Activated naive CD4-positive, alpha-beta T cell treated with anti-CD3 and anti-CD28 coated beads for 36 hours (primary cell): ENCODE measurements at regions of chr3 and their contacts with region 1.

Region 1: GRCh38 chr3:9890249-9891071 is at the start of gene JAGN1:
- DNase-seq: peak; percentile 95
- H3K4me3 Mint-ChIP-seq: peak within 1 kb of the TSS; percentile 98
- H3K27ac Mint-ChIP-seq: peak within 1 kb of the TSS; percentile 97
- H3K4me1 Mint-ChIP-seq: peaks cover 43% of the 10 kb centered on the region
- H3K27me3 Mint-ChIP-seq: no peaks in the 10 kb centered on the region
- total RNA-seq, gene JAGN1: 11.7 to 13.6 TPM

Region 2: GRCh38 chr3:9779721-9780457 is 110.6 kb before region 1 on chr3:
- CTCF ChIA-PET with region 1: interaction called, 4 read pairs
- intact Hi-C with region 1: loop called (anchors 1 kb)
- DNase-seq: peak; percentile 47
- H3K4me3 Mint-ChIP-seq: no peak overlapping the region
- H3K27ac Mint-ChIP-seq: peak overlapping the region; percentile 91
- H3K4me1 Mint-ChIP-seq: peaks cover 56% of the 10 kb centered on the region
- H3K27me3 Mint-ChIP-seq: no peaks in the 10 kb centered on the region

Region 3: DNA sequence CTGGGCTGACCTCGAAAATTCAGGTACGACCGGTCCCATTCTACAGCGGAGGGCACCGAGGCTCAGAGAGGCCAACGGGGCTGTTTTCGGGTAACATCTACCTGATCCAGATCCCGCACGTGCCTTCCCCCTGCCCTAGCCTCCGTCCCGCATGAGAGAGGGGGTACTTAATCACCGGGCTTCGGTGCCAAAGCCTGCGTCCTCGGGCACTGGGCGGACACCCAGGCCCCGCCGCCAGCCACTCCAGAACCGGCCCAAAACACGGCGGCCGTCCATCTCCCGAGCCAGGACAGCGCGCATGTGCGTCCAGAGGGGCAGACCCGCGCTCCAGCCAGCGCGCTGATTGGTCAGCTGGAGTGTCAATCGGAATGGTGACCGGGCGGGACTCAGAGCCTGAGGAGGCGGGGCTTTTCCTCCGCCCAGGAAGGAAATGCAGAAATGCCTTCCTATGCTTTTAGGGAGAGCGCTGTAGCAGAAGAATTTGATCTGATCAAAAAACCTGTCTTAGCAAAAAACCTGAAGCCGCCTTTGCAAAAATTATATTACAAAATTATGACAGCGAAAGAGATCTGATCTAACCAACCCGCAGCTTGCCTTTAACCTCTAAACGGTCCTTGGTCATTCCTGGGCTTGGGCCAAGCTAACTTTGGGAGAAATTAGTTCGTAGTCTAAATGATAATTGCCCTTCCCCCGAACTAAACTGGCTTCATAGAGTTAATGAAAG is 46.6 kb before region 1 on chr3 and contains the start of gene RPUSD3:
- CTCF ChIA-PET with region 1: no interaction called
- intact Hi-C with region 1: loop called (anchors 1 kb)
- DNase-seq: peak; percentile 98
- H3K4me3 Mint-ChIP-seq: peak within 1 kb of the TSS; percentile 98
- H3K27ac Mint-ChIP-seq: peak within 1 kb of the TSS; percentile 89
- H3K4me1 Mint-ChIP-seq: peaks cover 30% of the 10 kb centered on the region
- H3K27me3 Mint-ChIP-seq: no peaks in the 10 kb centered on the region
- total RNA-seq, gene RPUSD3: 82.0 to 83.7 TPM

Region 4: GRCh38 chr3:9946112-9947024 is 55.9 kb after region 1 on chr3:
- CTCF ChIA-PET with region 1: no interaction called
- intact Hi-C with region 1: loop called (anchors 1 kb)
- DNase-seq: peak; percentile 79
- H3K4me3 Mint-ChIP-seq: peak overlapping the region; percentile 79
- H3K27ac Mint-ChIP-seq: peak overlapping the region; percentile 79
- H3K4me1 Mint-ChIP-seq: peaks cover 17% of the 10 kb centered on the region
- H3K27me3 Mint-ChIP-seq: no peaks in the 10 kb centered on the region

Region 5: GRCh38 chr3:9970020-9970687 is 79.7 kb after region 1 on chr3:
- CTCF ChIA-PET with region 1: no interaction called
- intact Hi-C with region 1: no loop called
- DNase-seq: no peak
- H3K4me3 Mint-ChIP-seq: no peak overlapping the region
- H3K27ac Mint-ChIP-seq: no peak overlapping the region
- H3K4me1 Mint-ChIP-seq: no peaks in the 10 kb centered on the region
- H3K27me3 Mint-ChIP-seq: no peaks in the 10 kb centered on the region

Region 6: GRCh38 chr3:10026084-10026890 is 135.8 kb after region 1 on chr3 and contains the start of gene FANCD2:
- CTCF ChIA-PET with region 1: no interaction called
- intact Hi-C with region 1: loop called (anchors 1 kb)
- DNase-seq: peak; percentile 94
- H3K4me3 Mint-ChIP-seq: peak within 1 kb of the TSS; percentile 92
- H3K27ac Mint-ChIP-seq: peak within 1 kb of the TSS; percentile 98
- H3K4me1 Mint-ChIP-seq: peaks cover 22% of the 10 kb centered on the region
- H3K27me3 Mint-ChIP-seq: no peaks in the 10 kb centered on the region
- total RNA-seq, gene FANCD2: 86.3 to 90.8 TPM

Region 7: DNA sequence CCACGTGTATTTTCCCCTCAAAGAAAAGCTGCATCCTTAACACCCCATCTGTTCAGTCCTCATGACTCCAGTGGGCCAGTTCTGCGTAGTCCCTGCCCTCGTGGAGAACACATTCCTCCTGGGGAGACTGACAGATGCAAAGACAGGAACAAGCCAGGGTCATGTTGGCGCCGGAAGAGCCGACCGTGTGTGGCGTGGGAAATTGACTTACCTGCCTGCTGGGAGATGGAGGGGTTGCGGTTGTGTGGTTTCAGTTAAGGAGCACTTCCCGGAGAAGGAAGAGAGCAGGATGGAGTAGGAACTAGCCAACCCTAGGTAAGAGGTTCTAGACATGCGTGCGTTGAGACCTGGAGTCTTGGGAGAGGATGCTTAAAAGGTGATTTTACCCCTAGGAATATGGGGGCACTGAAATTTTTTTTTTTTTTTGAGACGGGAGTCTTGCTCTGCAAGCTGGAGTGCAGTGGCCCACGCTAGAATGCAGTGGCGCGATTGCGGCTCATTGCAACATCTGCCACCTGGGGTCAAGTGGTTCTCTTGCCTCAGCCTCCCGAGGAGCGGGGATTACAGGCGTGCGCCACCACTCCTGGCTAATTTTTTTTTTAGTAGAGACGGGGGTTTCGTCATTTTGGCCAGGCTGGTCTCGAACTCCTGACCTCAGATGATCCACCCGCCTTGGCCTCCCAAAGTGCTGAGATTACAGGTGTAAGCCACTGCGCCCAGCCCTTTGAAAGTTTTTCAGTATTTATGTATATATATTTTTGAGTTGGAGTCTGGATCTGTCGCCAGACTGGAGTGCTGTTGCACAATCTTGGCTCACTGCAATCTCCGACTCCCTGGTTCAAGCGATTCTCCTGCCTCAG is 252.5 kb after region 1 on chr3:
- CTCF ChIA-PET with region 1: no interaction called
- intact Hi-C with region 1: loop called (anchors 5 kb)
- DNase-seq: peak; percentile 48
- H3K4me3 Mint-ChIP-seq: peak overlapping the region; percentile 84
- H3K27ac Mint-ChIP-seq: peak overlapping the region; percentile 87
- H3K4me1 Mint-ChIP-seq: peaks cover 32% of the 10 kb centered on the region
- H3K27me3 Mint-ChIP-seq: no peaks in the 10 kb centered on the region

Region 8: DNA sequence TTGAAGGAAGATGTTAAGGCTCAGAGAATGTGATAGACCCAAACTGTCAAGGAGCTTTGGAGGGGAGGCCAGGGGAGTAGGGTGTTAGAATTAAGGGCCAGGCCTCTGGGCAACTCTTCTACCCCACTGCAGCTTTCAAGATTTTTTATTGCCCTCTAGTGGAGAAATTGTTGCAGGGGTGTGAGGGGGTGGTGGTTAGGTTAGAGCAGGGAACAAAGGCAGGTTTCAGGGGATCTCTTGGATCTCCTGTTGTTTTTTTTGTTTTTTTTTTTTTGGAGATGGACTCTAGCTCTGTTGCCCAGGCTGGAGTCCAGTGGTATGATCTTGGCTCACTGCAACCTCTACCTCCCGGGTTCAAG is 431.9 kb after region 1 on chr3:
- CTCF ChIA-PET with region 1: no interaction called
- intact Hi-C with region 1: loop called (anchors 1 kb)
- DNase-seq: peak; percentile 29
- H3K4me3 Mint-ChIP-seq: no peak overlapping the region
- H3K27ac Mint-ChIP-seq: no peak overlapping the region
- H3K4me1 Mint-ChIP-seq: peaks cover 23% of the 10 kb centered on the region
- H3K27me3 Mint-ChIP-seq: peaks cover 1% of the 10 kb centered on the region